Panc1 (cell line): ENCODE measurements at regions of chr22 and their contacts with region 1.

Region 1: DNA sequence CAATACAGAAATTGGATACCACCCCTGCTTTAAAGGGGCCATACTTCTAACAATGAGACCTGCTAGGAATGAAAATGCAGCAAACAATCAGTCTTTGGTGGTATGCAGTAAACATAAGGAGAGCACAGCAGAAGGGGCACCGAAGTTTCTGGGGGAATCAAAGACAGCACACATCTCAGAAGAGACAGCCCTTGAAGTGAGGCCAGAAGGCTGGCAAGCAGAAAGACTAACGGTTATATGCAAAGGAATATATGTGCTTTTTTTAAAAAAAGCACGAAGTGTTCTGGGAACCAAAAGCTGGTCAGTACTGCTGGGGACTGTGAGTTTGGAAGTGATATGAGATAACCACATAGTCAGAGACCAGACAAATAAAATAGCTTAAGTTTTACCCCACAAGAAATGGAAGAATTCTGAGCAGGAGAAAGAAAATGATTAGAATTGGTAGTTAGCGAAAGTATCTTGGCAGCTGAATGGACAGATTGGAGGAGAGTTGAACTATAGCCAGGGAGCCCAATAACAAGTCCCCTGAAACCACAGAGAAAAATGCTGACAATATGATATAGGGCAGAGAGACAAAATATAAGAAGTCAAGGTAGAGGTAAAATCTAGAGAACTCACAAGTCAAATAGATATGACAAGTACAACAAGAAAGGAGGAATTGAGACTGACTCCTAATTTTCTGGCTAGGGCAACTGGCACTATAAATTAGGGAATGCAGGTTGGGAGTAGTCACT is 125.7 kb downstream of the MRTFA start:
- DNase-seq: no peak
- ATAC-seq: no peak
- H3K4me3 ChIP-seq: no peak overlapping the region
- H3K27ac ChIP-seq: peak overlapping the region; percentile 78
- H3K4me1 ChIP-seq: peaks cover 53% of the 10 kb centered on the region
- H3K27me3 ChIP-seq: no peaks in the 10 kb centered on the region
- CTCF ChIP-seq: no peak

Region 2: DNA sequence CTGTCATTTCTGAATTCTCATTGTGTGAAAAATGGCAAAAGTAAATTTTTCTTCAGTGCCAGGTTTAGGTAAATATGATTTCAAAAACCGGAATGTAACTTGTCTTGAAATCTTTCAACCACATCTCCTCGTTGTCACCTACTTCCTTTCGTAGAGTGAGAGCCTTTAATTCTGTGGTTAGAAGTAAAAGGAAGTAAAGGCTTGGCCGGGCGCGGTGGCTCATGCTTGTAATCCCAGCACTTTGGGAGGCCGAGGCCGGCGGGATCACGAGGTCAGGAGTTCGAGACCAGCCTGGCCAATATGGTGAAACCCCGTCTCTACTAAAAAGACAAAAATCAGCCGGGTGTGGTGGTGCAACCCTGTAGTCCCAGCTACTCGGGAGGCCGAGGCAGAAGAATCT is 110.6 kb before region 1 on chr22:
- CTCF ChIA-PET with region 1: no interaction called
- POLR2A ChIA-PET with region 1: no interaction called
- in situ Hi-C with region 1: no loop called
- intact Hi-C with region 1: no loop called
- DNase-seq: no peak
- ATAC-seq: no peak
- H3K4me3 ChIP-seq: no peak overlapping the region
- H3K27ac ChIP-seq: no peak overlapping the region
- H3K4me1 ChIP-seq: no peaks in the 10 kb centered on the region
- H3K27me3 ChIP-seq: no peaks in the 10 kb centered on the region
- CTCF ChIP-seq: no peak

Region 3: GRCh38 chr22:40449676-40450035 is 61.1 kb before region 1 on chr22:
- CTCF ChIA-PET with region 1: no interaction called
- POLR2A ChIA-PET with region 1: interaction called, 12 read pairs
- in situ Hi-C with region 1: no loop called
- intact Hi-C with region 1: no loop called
- DNase-seq: no peak
- ATAC-seq: no peak
- H3K4me3 ChIP-seq: no peak overlapping the region
- H3K27ac ChIP-seq: no peak overlapping the region
- H3K4me1 ChIP-seq: peaks cover 9% of the 10 kb centered on the region
- H3K27me3 ChIP-seq: no peaks in the 10 kb centered on the region
- CTCF ChIP-seq: no peak

Region 4: GRCh38 chr22:40485813-40486667 is 24.8 kb before region 1 on chr22:
- CTCF ChIA-PET with region 1: no interaction called
- POLR2A ChIA-PET with region 1: no interaction called
- in situ Hi-C with region 1: no loop called
- intact Hi-C with region 1: no loop called
- DNase-seq: no peak
- ATAC-seq: no peak
- H3K4me3 ChIP-seq: no peak overlapping the region
- H3K27ac ChIP-seq: peak overlapping the region; percentile 25; the same call in 1 of the 2 replicates
- H3K4me1 ChIP-seq: peaks cover 8% of the 10 kb centered on the region
- H3K27me3 ChIP-seq: no peaks in the 10 kb centered on the region
- CTCF ChIP-seq: no peak

Region 5: GRCh38 chr22:40572976-40573375 is 62.2 kb after region 1 on chr22:
- CTCF ChIA-PET with region 1: no interaction called
- POLR2A ChIA-PET with region 1: no interaction called
- in situ Hi-C with region 1: no loop called
- intact Hi-C with region 1: no loop called
- DNase-seq: no peak
- ATAC-seq: no peak
- H3K4me3 ChIP-seq: no peak overlapping the region
- H3K27ac ChIP-seq: no peak overlapping the region
- H3K4me1 ChIP-seq: peaks cover 4% of the 10 kb centered on the region; the same call in 1 of the 2 replicates
- H3K27me3 ChIP-seq: no peaks in the 10 kb centered on the region
- CTCF ChIP-seq: no peak